ENCODE measurements at regions of chr2 and their contacts with region 1.

Region 1: DNA sequence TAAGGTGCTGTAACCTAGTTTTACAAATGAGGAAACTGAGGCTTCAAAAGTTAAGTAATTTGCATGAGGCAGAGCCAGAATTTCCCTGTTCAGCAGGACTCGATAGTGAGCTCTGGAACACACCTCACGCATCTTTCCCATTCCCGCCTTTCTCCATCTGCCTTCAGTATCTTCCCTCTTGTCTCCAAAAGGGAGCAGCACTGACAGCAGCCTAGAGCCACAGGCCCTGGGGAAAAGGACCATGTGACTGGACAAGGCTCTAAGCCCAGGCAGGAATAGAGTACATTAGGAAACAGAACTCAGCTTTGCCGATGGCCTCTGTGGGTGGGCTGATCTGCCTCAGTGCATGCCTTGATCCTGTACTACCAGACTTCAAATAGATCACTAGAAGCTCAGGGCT is 21.5 kb downstream of the GPR155 start:
- DNase-seq: no peak
- ATAC-seq: no peak
- H3K4me3 ChIP-seq: no peak overlapping the region
- H3K27ac ChIP-seq: no peak overlapping the region
- H3K4me1 ChIP-seq: no peaks in the 10 kb centered on the region
- H3K27me3 ChIP-seq: no peaks in the 10 kb centered on the region
- CTCF ChIP-seq: no peak

Region 2: GRCh38 chr2:174522553-174522952 is 57.2 kb after region 1 on chr2:
- intact Hi-C with region 1: loop called (anchors 5 kb)
- DNase-seq: no peak
- ATAC-seq: no peak
- H3K4me3 ChIP-seq: no peak overlapping the region
- H3K27ac ChIP-seq: no peak overlapping the region
- H3K4me1 ChIP-seq: no peaks in the 10 kb centered on the region
- H3K27me3 ChIP-seq: peaks cover 0 to 5% (median 3%) of the 10 kb centered on the region in 3 donors
- CTCF ChIP-seq: peak; percentile 20

Region 3: GRCh38 chr2:174603280-174603679 is 138.0 kb after region 1 on chr2:
- intact Hi-C with region 1: loop called (anchors 2 kb)
- DNase-seq: peak in 1 of 2 donors; percentile 58
- ATAC-seq: peak; percentile 63 to 89 (median 76)
- H3K4me3 ChIP-seq: no peak overlapping the region
- H3K27ac ChIP-seq: no peak overlapping the region
- H3K4me1 ChIP-seq: no peaks in the 10 kb centered on the region
- H3K27me3 ChIP-seq: no peaks in the 10 kb centered on the region
- CTCF ChIP-seq: peak; percentile 49

Region 4: GRCh38 chr2:174682578-174683391 is 217.5 kb after region 1 on chr2:
- intact Hi-C with region 1: loop called (anchors 5 to 10 kb)
- DNase-seq: peak; percentile 75 to 80
- ATAC-seq: peak; percentile 53 to 83 (median 72)
- H3K4me3 ChIP-seq: peak overlapping the region; percentile 79
- H3K27ac ChIP-seq: peak overlapping the region; percentile 60
- H3K4me1 ChIP-seq: no peaks in the 10 kb centered on the region
- H3K27me3 ChIP-seq: peaks cover 0 to 30% (median 0%) of the 10 kb centered on the region in 3 donors
- CTCF ChIP-seq: no peak

Measured in psoas muscle (tissue), 8 donors.